HCT116 (cell line): ENCODE measurements at regions of chr12 and their contacts with region 1.

Region 1: GRCh38 chr12:106386813-106387535 is 29.4 kb downstream of the POLR3B start:
- DNase-seq: no peak
- ATAC-seq: no peak
- H3K4me3 ChIP-seq: no peak overlapping the region
- H3K27ac ChIP-seq: no peak overlapping the region
- H3K4me1 ChIP-seq: no peaks in the 10 kb centered on the region
- H3K27me3 ChIP-seq: no peaks in the 10 kb centered on the region
- CTCF ChIP-seq: no peak
- POLR2A ChIP-seq: no peak
- RAD21 ChIP-seq: no peak

Region 2: GRCh38 chr12:106709068-106709511 is 322.1 kb after region 1 on chr12:
- CTCF ChIA-PET with region 1: no interaction called
- POLR2A ChIA-PET with region 1: no interaction called
- RAD21 ChIA-PET with region 1: no interaction called
- intact Hi-C with region 1: no loop called
- DNase-seq: no peak
- ATAC-seq: peak; percentile 70
- H3K4me3 ChIP-seq: no peak overlapping the region
- H3K27ac ChIP-seq: no peak overlapping the region
- H3K4me1 ChIP-seq: no peaks in the 10 kb centered on the region
- H3K27me3 ChIP-seq: peaks cover 4% of the 10 kb centered on the region; the same call in 1 of the 2 replicates
- CTCF ChIP-seq: peak in 2 of 3 experiments; percentile 21 to 28; a peak in 3 of 6 replicates
- POLR2A ChIP-seq: no peak
- RAD21 ChIP-seq: no peak

Region 3: GRCh38 chr12:106841510-106842302 is 454.7 kb after region 1 on chr12:
- CTCF ChIA-PET with region 1: interaction called, 9 read pairs
- POLR2A ChIA-PET with region 1: no interaction called
- RAD21 ChIA-PET with region 1: interaction called in 1 of 2 experiments, 3 read pairs
- intact Hi-C with region 1: loop called (anchors 1 kb)
- DNase-seq: peak; percentile 31
- ATAC-seq: peak; percentile 82
- H3K4me3 ChIP-seq: no peak overlapping the region
- H3K27ac ChIP-seq: no peak overlapping the region
- H3K4me1 ChIP-seq: peaks cover 7 to 12% of the 10 kb centered on the region in 2 experiments
- H3K27me3 ChIP-seq: no peaks in the 10 kb centered on the region
- CTCF ChIP-seq: peak; percentile 64 to 81 (median 69); a peak in 5 of 6 replicates
- POLR2A ChIP-seq: no peak
- RAD21 ChIP-seq: peak; percentile 81

Region 4: DNA sequence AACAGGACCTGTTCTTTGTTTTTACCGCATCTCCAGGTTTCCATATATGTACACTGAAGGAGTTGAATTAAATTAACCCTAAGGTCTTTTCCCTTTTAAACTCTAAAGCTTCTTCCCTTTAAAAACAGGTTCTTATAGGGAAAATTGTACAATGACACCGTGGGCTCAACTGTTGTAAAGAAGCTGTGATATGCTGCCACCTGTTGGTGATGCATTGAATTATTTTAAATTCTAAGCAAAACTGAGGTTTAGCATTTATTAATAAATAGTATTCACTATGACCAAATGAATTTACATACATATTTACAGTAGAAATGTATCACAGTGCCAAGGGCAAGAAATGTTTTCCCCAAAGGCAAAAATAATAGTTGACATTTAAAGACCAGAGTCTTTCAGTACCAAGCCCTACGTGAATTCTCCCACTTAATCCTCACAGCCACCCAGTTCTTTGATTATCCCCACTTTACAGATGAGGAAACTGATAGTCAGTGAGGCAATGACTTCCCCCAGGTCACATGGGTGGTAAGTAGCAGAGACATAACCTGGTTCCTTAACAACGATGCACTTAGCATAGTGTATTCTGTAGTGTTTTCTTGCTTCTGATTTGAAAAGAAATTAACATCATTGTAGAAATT is 533.1 kb after region 1 on chr12:
- CTCF ChIA-PET with region 1: interaction called, 3 read pairs
- POLR2A ChIA-PET with region 1: no interaction called
- RAD21 ChIA-PET with region 1: no interaction called
- intact Hi-C with region 1: loop called (anchors 1 kb)
- DNase-seq: peak; percentile 34
- ATAC-seq: peak; percentile 66
- H3K4me3 ChIP-seq: no peak overlapping the region
- H3K27ac ChIP-seq: no peak overlapping the region
- H3K4me1 ChIP-seq: no peaks in the 10 kb centered on the region
- H3K27me3 ChIP-seq: no peaks in the 10 kb centered on the region
- CTCF ChIP-seq: peak; percentile 65 to 85 (median 70); a peak in 5 of 6 replicates
- POLR2A ChIP-seq: no peak
- RAD21 ChIP-seq: peak; percentile 83

Region 5: GRCh38 chr12:107109741-107110719 is 723.1 kb after region 1 on chr12:
- CTCF ChIA-PET with region 1: no interaction called
- POLR2A ChIA-PET with region 1: no interaction called
- RAD21 ChIA-PET with region 1: no interaction called
- intact Hi-C with region 1: loop called (anchors 10 kb)
- DNase-seq: no peak
- ATAC-seq: no peak
- H3K4me3 ChIP-seq: no peak overlapping the region
- H3K27ac ChIP-seq: no peak overlapping the region
- H3K4me1 ChIP-seq: peaks cover 0 to 2% of the 10 kb centered on the region in 2 experiments; a peak in 1 of 4 replicates
- H3K27me3 ChIP-seq: no peaks in the 10 kb centered on the region
- CTCF ChIP-seq: no peak
- POLR2A ChIP-seq: no peak
- RAD21 ChIP-seq: no peak